CD8-positive, alpha-beta T cell (primary cell): ENCODE measurements at regions of chr19 and their contacts with region 1.

Region 1: GRCh38 chr19:46954993-46955812 is 64.4 kb upstream of the NPAS1 start:
- DNase-seq: peak in 8 of 9 experiments; percentile 11 to 75 (median 42)
- ATAC-seq: peak; percentile 85
- H3K4me3 ChIP-seq: peak overlapping the region; percentile 33 to 40
- H3K4me3 Mint-ChIP-seq: peak overlapping the region; percentile 80
- H3K27ac ChIP-seq: peak overlapping the region; percentile 38 to 73
- H3K27ac Mint-ChIP-seq: peak overlapping the region; percentile 89
- H3K4me1 ChIP-seq: peaks cover 32% of the 10 kb centered on the region
- H3K4me1 Mint-ChIP-seq: peaks cover 69% of the 10 kb centered on the region
- H3K27me3 ChIP-seq: no peaks in the 10 kb centered on the region
- H3K27me3 Mint-ChIP-seq: no peaks in the 10 kb centered on the region
- CTCF ChIP-seq: no peak

Region 2: DNA sequence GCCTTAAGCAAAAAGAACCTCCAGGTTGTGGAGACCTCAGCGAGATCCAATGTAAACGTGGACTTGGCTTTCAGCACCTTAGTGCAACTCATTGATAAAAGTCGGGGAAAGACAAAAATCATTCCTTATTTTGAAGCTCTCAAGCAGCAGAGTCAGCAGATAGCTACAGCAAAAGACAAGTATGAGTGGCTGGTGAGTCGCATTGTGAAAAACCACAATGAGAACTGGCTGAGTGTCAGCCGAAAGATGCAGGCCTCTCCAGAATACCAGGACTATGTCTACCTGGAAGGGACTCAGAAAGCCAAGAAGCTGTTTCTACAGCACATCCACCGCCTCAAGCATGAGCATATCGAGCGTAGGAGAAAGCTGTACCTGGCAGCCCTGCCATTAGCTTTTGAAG is 35.9 kb before region 1 on chr19:
- CTCF ChIA-PET with region 1: no interaction called
- POLR2A ChIA-PET with region 1: no interaction called
- intact Hi-C with region 1: loop called in 1 of 2 experiments (anchors 5 kb)
- DNase-seq: no peak
- ATAC-seq: no peak
- H3K4me3 ChIP-seq: no peak overlapping the region
- H3K4me3 Mint-ChIP-seq: no peak overlapping the region
- H3K27ac ChIP-seq: no peak overlapping the region
- H3K27ac Mint-ChIP-seq: no peak overlapping the region
- H3K4me1 ChIP-seq: peaks cover 5% of the 10 kb centered on the region
- H3K4me1 Mint-ChIP-seq: peaks cover 42% of the 10 kb centered on the region
- H3K27me3 ChIP-seq: no peaks in the 10 kb centered on the region
- H3K27me3 Mint-ChIP-seq: no peaks in the 10 kb centered on the region
- CTCF ChIP-seq: no peak

Region 3: DNA sequence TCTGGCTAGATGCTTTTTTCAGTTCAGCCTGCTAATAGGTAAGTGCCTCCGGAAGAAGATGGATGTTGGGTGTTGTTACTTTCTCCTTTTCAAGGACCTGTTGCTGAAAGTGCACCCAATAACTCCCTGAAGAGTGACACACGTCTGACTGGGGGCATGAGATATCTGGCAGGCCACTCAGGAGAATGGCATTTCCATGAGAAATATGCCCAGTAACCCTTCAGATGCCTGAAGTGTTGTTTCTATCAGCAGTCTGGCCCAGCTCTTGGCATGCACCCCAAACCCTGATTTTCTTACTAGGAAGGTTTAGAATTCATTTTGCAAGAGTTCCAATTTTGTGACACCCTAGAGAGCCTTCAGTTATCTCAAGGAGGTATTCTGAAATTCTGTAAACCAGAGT is 22.9 kb before region 1 on chr19:
- CTCF ChIA-PET with region 1: interaction called, 3 read pairs
- POLR2A ChIA-PET with region 1: interaction called, 17 read pairs
- intact Hi-C with region 1: loop called (anchors 1 to 2 kb)
- DNase-seq: no peak
- ATAC-seq: no peak
- H3K4me3 ChIP-seq: no peak overlapping the region
- H3K4me3 Mint-ChIP-seq: no peak overlapping the region
- H3K27ac ChIP-seq: no peak overlapping the region
- H3K27ac Mint-ChIP-seq: peak overlapping the region; percentile 80
- H3K4me1 ChIP-seq: peaks cover 34% of the 10 kb centered on the region
- H3K4me1 Mint-ChIP-seq: peaks cover 68% of the 10 kb centered on the region
- H3K27me3 ChIP-seq: no peaks in the 10 kb centered on the region
- H3K27me3 Mint-ChIP-seq: no peaks in the 10 kb centered on the region
- CTCF ChIP-seq: no peak

Region 4: DNA sequence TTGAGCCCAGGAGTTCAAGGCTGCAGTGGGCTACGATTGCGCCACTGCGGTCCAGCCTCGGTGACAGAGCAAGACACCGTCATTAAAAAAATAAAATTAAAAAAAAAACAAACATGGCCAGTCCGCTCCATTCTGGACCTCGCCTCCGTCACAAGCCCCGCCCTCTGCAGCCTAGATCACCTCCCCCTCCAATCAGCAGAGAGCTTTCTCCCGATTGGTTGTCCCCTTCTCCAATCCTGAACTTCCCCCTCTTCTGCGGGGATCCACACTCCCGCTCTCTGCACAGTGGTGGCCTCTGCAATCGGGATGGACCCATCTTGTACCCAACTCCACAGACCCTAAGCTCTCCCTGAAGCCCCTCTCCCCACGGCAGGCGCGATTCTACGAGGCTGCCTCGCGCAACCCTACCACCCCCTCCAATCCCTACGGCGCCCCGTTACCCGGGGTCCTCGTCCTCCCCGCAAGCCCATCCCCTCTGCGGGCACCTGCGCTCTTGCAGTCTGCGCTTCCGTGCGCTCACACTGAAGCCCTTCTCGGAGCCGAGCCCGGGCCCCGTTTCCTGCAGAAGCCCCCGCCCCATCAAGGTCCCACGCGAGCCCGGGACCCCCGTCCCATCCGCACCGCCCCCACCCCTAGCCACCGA is 92.7 kb after region 1 on chr19:
- CTCF ChIA-PET with region 1: no interaction called
- POLR2A ChIA-PET with region 1: no interaction called
- intact Hi-C with region 1: no loop called
- DNase-seq: peak; percentile 22 to 85 (median 65)
- ATAC-seq: peak; percentile 37
- H3K4me3 ChIP-seq: peak overlapping the region; percentile 67 to 96
- H3K4me3 Mint-ChIP-seq: peak overlapping the region; percentile 98
- H3K27ac ChIP-seq: peak overlapping the region; percentile 31 to 62
- H3K27ac Mint-ChIP-seq: peak overlapping the region; percentile 91
- H3K4me1 ChIP-seq: peaks cover 8% of the 10 kb centered on the region
- H3K4me1 Mint-ChIP-seq: peaks cover 20% of the 10 kb centered on the region
- H3K27me3 ChIP-seq: no peaks in the 10 kb centered on the region
- H3K27me3 Mint-ChIP-seq: no peaks in the 10 kb centered on the region
- CTCF ChIP-seq: no peak